GM10248 (cell line): ENCODE measurements at regions of chr10 and their contacts with region 1.

Region 1: DNA sequence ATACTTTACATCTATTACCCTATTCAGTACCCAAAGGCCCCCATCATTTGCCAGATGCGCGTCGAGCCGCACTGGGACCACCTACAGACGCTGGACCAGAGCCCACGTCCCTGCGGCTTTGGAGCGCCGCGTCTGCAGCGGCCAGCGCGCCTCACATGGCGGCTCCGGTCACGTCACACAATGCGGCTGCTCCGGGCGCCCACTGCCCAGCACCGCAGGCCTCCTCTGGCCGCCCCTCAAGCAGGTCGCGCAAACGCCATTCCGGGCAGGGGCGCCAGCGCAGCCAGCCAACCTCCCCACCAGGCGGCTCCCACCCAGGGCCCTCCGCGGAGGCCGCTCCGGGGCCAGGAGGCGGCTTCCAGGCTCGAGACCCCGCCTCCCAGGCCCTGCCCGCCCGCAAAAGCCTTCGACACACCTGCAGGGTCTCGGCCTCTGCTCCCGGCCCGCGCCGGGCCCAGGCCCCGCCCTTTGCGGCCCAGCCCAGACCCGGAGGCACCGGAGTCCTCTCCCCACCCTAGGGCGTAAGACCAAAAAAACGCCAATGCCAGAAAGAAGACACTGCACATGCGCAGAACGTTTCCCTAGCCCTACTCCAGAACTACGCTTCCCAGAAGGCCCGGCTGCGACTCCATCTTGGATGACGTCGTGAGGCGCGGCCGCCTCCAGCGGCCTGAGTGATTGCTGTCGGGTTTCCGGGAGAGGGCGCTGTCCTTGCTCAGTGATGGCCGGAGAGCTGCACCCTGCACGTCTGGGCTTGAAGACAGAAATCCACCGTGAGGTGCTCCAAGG is at the start of gene ZNF25:
- DNase-seq: peak; percentile 97
- CTCF ChIP-seq: peak; percentile 86

Region 2: DNA sequence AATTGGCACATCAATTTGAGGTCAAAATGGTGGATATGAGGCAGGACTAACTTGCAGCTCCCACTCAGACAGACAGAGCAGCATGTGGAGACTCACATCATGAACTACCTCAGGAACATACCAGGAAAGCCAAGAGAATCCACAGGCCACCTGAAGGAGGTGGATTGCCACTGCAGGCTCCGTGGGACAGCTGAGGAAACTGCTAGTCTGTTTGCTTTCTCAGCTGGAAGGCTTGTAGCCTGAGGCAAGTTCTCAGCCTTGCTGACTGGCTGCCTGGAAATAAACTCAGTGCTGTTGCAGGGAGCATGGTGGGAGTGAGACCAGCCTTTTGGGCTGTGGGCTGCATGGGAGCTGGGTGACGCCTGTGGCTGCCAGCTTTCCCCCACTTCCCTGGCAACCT is 321.8 kb before region 1 on chr10:
- CTCF ChIA-PET with region 1: no interaction called
- POLR2A ChIA-PET with region 1: no interaction called
- DNase-seq: no peak
- CTCF ChIP-seq: no peak

Region 3: DNA sequence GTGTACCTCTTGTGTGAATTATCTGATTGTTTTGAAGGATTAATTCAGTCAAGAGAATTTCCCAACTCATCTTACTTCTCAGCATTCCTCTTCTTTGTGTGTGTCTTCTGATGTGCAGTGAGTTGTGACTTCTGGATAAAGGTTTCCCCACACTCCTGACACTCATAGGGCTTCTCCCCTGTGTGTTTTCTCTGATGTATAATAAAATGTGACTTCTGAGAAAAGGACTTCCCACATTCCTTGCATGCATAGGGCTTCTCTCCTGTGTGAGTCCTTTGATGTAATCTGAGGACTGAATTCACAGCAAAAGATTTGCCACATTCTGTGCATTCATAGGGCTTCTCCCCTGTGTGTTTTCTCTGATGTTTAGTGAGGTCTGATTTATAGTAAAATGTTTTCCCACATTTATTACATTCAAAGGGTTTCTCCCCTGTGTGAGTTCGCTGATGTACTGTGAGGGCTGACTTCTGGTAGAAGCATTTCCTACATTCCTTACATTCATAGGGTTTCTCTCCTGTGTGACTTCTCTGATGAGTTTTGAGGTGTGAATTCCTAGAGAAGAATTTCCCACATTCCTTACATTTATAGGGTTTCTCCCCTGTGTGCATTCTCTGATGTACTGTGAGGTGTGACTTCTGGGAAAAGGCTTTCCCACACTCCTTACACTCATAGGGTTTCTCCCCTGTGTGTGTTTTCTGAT is 24.1 kb before region 1 on chr10:
- CTCF ChIA-PET with region 1: no interaction called
- POLR2A ChIA-PET with region 1: no interaction called
- DNase-seq: no peak
- CTCF ChIP-seq: no peak

Region 4: DNA sequence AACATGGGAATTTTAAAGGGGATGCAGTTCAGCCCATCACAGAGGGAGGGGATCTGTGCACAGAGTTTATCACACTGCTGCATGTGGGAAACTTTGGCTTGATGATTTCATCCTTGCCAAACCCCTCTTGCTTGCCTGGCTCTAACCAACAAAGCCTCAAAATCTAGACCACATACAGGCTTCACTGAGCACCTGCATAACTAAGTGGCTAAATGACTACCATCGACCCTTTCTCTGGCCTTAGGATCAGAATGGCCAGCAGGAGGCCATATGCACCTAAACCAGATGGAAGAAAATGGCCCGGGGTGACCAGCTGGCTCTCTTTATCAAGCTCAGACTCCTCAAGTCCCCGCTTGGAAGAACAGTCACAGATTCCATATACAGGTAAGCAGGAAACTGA is 15.8 kb after region 1 on chr10:
- CTCF ChIA-PET with region 1: interaction called, 15 read pairs
- POLR2A ChIA-PET with region 1: no interaction called
- DNase-seq: no peak
- CTCF ChIP-seq: no peak

Region 5: GRCh38 chr10:38010119-38010903 is 34.0 kb after region 1 on chr10 and contains the start of gene ZNF33A:
- CTCF ChIA-PET with region 1: interaction called, 12 read pairs
- POLR2A ChIA-PET with region 1: no interaction called
- DNase-seq: peak; percentile 86
- CTCF ChIP-seq: no peak